ENCODE measurements at regions of chr2 and their contacts with region 1.

Region 1: DNA sequence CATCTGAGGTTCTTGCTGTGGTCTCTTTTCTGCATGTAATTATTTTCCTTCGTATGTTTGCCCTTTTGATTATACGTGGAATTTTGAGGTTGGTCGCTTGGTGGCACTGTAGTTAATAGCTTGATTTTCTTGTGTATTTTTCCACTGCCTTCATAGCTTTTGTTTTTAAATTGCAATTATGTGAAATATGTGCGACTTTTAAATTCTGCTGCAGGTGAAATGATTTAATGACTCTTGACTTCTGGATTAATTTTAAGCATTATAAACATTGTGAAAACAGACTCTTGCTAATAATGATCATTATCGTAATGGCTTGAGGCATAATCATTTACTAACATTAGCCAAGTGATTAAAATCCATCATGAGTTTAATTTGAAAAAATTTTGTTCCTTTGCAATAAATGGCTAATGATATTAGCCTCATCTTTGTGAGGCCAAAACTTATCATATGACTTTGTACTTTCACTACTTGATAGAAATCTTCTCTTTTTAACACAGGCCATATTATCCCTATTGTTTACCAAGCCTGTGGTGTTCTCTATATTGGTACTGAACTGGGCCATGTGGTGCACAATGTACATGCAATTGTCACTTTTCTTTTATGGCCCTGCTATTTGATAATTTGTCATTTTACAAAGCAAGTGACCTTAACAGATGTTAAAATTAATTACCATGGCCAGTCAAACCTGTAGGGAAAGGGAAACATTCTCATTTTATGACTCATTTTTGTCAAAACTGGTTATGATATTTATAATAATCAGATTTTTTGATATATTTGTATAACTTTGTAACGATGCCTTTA is 62.8 kb upstream of the NEUROD1 start:
- DNase-seq: peak; percentile 56
- ATAC-seq: peak; percentile 49
- H3K4me3 Mint-ChIP-seq: no peak overlapping the region
- H3K27ac Mint-ChIP-seq: no peak overlapping the region
- H3K4me1 Mint-ChIP-seq: no peaks in the 10 kb centered on the region
- H3K27me3 Mint-ChIP-seq: peaks cover under 1% of the 10 kb centered on the region
- CTCF ChIP-seq: peak; percentile 64

Region 2: DNA sequence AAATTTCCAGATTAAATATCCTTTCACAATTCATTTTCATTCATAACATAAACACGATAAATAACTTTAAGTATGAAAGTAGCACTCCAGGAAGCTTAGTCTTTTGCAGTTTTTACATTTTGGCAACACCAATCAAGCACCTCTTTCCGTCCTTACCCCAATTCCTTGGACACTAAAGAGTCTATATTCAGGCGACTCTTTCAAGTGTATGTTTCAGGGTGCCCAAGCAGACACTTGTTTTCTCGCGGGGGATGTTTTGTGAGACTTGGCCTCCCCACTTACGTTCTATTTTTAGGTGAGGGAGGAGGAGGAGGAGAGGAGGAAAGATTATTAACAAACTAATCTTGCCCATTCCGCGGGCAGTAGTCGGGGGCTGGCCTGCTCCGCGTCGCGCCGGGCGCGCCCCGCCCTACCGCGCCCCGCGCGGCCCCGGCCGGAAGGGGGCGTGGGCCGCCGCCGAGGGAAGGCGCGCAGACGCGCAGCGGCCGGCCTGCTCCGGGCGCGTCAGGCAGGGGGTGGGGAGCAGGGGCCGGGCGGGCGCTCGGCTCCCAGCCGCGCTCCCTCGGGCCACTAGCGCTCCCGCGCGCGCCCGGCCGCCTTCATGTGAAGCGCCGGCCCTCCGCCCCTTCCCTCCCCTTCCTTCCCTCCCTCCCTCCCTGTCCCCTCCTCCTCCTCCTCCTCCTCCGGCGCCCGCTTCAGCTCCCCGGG is 148.3 kb after region 1 on chr2 and contains the start of gene ITPRID2:
- CTCF ChIA-PET with region 1: interaction called, 11 read pairs
- POLR2A ChIA-PET with region 1: no interaction called
- intact Hi-C with region 1: no loop called
- DNase-seq: peak; percentile 73
- ATAC-seq: peak; percentile 97
- H3K4me3 Mint-ChIP-seq: peak within 1 kb of the TSS; percentile 87
- H3K27ac Mint-ChIP-seq: peak within 1 kb of the TSS; percentile 86
- H3K4me1 Mint-ChIP-seq: peaks cover 25% of the 10 kb centered on the region
- H3K27me3 Mint-ChIP-seq: peaks cover 9% of the 10 kb centered on the region
- CTCF ChIP-seq: no peak
- total RNA-seq, gene ITPRID2: 42.5 to 50.8 TPM

Region 3: GRCh38 chr2:181904022-181904632 is 161.0 kb after region 1 on chr2:
- CTCF ChIA-PET with region 1: interaction called, 16 read pairs
- POLR2A ChIA-PET with region 1: no interaction called
- intact Hi-C with region 1: loop called (anchors 2 kb)
- DNase-seq: peak; percentile 6
- ATAC-seq: no peak
- H3K4me3 Mint-ChIP-seq: no peak overlapping the region
- H3K27ac Mint-ChIP-seq: no peak overlapping the region
- H3K4me1 Mint-ChIP-seq: peaks cover 27% of the 10 kb centered on the region
- H3K27me3 Mint-ChIP-seq: no peaks in the 10 kb centered on the region
- CTCF ChIP-seq: peak; percentile 67

Region 4: DNA sequence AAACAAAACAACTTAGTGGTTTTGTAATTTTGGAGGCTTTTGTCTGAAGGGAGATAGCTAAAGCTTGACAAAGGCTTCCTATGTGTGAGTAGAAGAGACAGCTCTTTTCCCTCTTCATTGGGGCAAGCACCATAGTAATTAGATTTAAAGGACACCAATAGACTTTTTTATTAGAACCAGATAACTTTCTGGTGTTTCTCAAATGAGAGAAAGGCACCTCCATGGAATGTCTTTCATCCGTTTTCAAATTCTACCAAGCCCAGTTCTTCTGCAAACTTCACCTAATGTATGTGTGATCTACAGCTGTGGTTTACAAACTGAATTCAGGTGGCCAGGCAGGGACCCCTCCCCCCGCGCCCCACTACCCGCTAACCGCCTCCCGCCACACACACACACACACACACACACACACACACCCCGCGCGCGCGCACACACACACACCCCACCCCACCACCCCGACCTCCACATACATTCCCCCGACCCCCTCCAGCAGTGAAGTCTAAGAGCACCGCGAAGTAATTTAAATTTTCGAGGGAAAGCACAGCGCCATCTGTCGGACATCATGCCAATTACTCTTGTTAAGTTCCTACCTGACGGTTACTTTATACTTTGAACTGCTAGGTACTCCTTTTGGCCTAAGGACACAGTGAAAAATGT is 210.9 kb after region 1 on chr2:
- CTCF ChIA-PET with region 1: interaction called, 16 read pairs
- POLR2A ChIA-PET with region 1: no interaction called
- intact Hi-C with region 1: loop called (anchors 10 kb)
- DNase-seq: peak; percentile 81
- ATAC-seq: peak; percentile 87
- H3K4me3 Mint-ChIP-seq: peak overlapping the region; percentile 40
- H3K27ac Mint-ChIP-seq: no peak overlapping the region
- H3K4me1 Mint-ChIP-seq: peaks cover 6% of the 10 kb centered on the region
- H3K27me3 Mint-ChIP-seq: peaks cover 6% of the 10 kb centered on the region
- CTCF ChIP-seq: peak; percentile 47

Region 5: GRCh38 chr2:182077451-182078142 is 334.5 kb after region 1 on chr2:
- CTCF ChIA-PET with region 1: interaction called, 21 read pairs
- POLR2A ChIA-PET with region 1: no interaction called
- intact Hi-C with region 1: loop called (anchors 5 kb)
- DNase-seq: peak; percentile 31
- ATAC-seq: no peak
- H3K4me3 Mint-ChIP-seq: no peak overlapping the region
- H3K27ac Mint-ChIP-seq: no peak overlapping the region
- H3K4me1 Mint-ChIP-seq: no peaks in the 10 kb centered on the region
- H3K27me3 Mint-ChIP-seq: peaks cover 5% of the 10 kb centered on the region
- CTCF ChIP-seq: peak; percentile 47

Measured in activated CD8-positive, alpha-beta T cell treated with anti-CD3 and anti-CD28 coated beads for 36 hours (primary cell).